K562 (cell line): ENCODE measurements at regions of chr14 and their contacts with region 1.

Region 1: DNA sequence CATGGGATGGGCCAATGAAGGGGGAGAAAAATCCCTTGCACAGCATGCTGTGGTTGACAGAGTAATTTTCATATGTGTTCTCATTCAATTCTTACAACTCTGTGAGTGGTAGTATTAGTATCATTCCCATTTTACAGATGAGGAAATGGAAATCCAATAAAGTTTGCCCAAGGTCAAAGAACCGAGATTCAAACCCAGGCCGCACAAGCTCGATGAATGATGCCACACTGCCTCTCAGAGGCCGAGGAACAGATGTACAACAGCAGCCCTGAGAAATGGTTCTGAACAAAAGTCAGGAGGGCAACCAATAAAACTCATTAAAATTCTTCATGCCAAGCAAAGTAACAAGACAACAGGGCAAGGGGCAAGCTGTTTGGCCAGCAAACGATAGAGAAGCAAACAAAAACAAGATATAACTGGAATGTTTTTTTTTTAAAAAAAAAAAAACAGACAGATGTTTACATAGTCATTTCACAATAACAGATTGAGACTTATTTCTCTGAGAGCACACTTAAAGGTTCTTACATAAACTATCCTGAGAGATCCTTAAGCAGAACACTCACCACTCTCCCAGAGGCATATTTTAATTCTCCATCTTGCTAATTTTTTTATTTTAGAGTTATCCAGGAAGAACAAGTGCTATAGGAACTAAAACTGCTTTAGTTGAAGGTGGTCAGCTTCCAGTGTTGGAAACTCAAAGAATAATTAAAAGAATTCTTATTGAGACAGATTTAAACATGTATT is 85.8 kb downstream of the EXOC5 start:
- DNase-seq: peak in 3 of 4 experiments; percentile 4 to 28 (median 9)
- ATAC-seq: peak; percentile 76
- H3K4me3 ChIP-seq: no peak overlapping the region
- H3K27ac ChIP-seq: no peak overlapping the region
- H3K4me1 ChIP-seq: no peaks in the 10 kb centered on the region
- H3K27me3 ChIP-seq: peaks cover 0 to 9% of the 10 kb centered on the region in 2 experiments; a peak in 3 of 5 replicates
- CTCF ChIP-seq: peak; percentile 46 to 59 (median 57); a peak in 5 of 6 replicates
- EP300 ChIP-seq: no peak
- POLR2A ChIP-seq: no peak
- RAD21 ChIP-seq: peak; percentile 64 to 69

Region 2: DNA sequence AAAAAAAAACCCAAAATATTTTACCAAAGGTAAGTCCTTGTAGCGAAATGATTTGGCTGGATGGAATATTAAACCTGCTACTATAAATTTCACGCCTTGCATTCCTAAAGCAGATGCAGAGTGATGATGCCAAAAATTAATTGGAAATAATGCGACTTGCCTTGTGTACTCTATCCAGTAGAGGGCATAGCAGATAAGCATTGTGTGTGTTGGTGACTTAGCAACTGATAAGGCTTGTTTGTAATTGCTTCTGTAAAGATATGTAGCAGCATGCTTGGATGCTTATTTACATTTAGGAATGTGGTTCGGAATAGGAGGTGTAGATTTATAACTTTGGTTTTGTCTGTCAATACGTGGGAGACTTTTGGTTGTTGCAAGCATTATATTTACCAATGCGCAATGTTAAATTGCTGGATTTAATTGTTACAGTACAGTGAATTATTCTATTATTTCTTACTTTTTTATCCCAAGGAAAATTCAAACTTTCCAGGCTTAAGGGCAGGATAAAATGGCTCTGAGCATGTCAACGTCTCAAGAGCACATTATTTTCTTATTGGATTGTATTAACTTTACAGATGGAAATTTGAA is 522.9 kb before region 1 on chr14:
- CTCF ChIA-PET with region 1: no interaction called
- POLR2A ChIA-PET with region 1: no interaction called
- in situ Hi-C with region 1: no loop called
- intact Hi-C with region 1: loop called (anchors 5 kb)
- DNase-seq: peak; percentile 32 to 44 (median 36)
- ATAC-seq: peak; percentile 80
- H3K4me3 ChIP-seq: no peak overlapping the region
- H3K27ac ChIP-seq: no peak overlapping the region
- H3K4me1 ChIP-seq: no peaks in the 10 kb centered on the region
- H3K27me3 ChIP-seq: peaks cover 5 to 7% of the 10 kb centered on the region in 2 experiments; a peak in 4 of 5 replicates
- CTCF ChIP-seq: peak; percentile 60 to 74 (median 61)
- EP300 ChIP-seq: no peak
- POLR2A ChIP-seq: no peak
- RAD21 ChIP-seq: peak; percentile 69 to 87

Region 3: DNA sequence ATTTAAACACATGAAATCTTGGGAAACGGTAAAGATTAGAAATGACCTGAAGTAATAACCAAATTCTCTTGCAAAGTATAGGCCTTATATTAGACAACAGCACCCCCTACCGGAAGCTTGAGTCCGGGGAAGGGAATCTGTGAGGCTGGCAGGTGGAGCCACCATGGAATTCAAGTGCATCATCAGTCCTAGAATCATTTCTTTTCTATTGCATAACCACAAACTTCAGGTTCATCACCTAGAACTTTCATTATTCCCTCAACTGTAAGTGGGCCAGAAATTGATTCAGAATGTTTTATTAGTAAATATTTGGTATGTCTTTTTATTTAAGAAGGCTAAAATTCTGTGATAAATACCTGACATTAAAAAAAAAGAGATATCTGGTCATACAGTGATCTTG is 134.4 kb after region 1 on chr14:
- CTCF ChIA-PET with region 1: no interaction called
- POLR2A ChIA-PET with region 1: no interaction called
- in situ Hi-C with region 1: no loop called
- intact Hi-C with region 1: loop called (anchors 10 kb)
- DNase-seq: peak; percentile 54 to 80 (median 55)
- ATAC-seq: peak; percentile 78
- H3K4me3 ChIP-seq: no peak overlapping the region
- H3K27ac ChIP-seq: no peak overlapping the region
- H3K4me1 ChIP-seq: no peaks in the 10 kb centered on the region
- H3K27me3 ChIP-seq: no peaks in the 10 kb centered on the region; a peak in 1 of 5 replicates
- CTCF ChIP-seq: peak; percentile 67 to 79 (median 69)
- EP300 ChIP-seq: no peak
- POLR2A ChIP-seq: no peak
- RAD21 ChIP-seq: peak; percentile 60 to 77